ENCODE measurements at regions of chr1 and their contacts with region 1.

Region 1: GRCh38 chr1:245031041-245031440 is 123.7 kb upstream of the KIF26B start:
- DNase-seq: no peak
- H3K4me3 ChIP-seq: no peak overlapping the region
- H3K27ac ChIP-seq: no peak overlapping the region
- H3K4me1 ChIP-seq: no peaks in the 10 kb centered on the region
- H3K27me3 ChIP-seq: no peaks in the 10 kb centered on the region
- CTCF ChIP-seq: no peak

Region 2: DNA sequence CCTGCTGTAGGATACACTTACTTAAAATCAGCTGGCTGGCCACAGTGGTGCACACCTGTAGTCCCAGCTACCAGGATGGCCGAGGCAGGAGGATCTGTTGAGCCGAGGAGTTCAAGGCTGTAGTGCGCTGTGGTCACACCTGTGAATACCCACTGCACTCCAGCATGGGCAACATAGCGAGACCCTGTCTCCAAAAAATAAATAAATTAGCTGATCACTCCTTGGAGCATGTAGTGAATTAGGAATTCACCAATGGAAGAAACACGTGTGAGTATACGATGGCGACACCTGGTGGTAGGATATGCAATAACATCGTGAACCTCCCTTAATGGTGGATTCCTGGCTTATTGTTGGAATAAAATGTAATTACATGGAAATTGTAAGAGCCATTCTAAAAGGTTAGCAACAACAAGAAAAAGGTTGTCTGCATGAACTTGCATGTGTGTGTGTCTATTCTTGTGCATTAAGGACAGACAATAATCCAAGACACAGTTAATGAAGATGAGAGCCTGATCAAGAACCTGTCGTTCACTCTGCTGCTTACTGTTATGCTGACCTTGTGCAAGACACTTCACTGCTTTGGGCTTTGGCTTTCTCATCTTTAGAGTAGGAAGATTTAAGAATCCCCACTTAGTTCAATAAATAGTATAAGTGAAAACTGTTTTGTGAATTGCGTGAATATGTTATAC is 234.2 kb before region 1 on chr1:
- CTCF ChIA-PET with region 1: interaction called, 4 read pairs
- dilution Hi-C with region 1: no loop called
- in situ Hi-C with region 1: loop called in 1 of 2 experiments (anchors 10 kb)
- intact Hi-C with region 1: no loop called
- DNase-seq: peak; percentile 44
- H3K4me3 ChIP-seq: no peak overlapping the region
- H3K27ac ChIP-seq: no peak overlapping the region
- H3K4me1 ChIP-seq: no peaks in the 10 kb centered on the region
- H3K27me3 ChIP-seq: no peaks in the 10 kb centered on the region
- CTCF ChIP-seq: peak; percentile 74 to 91

Region 3: GRCh38 chr1:244989813-244990212 is 41.2 kb before region 1 on chr1:
- CTCF ChIA-PET with region 1: no interaction called
- dilution Hi-C with region 1: loop called (anchors 5 kb)
- in situ Hi-C with region 1: no loop called
- intact Hi-C with region 1: no loop called
- DNase-seq: peak; percentile 51
- H3K4me3 ChIP-seq: no peak overlapping the region
- H3K27ac ChIP-seq: no peak overlapping the region
- H3K4me1 ChIP-seq: peaks cover 5% of the 10 kb centered on the region
- H3K27me3 ChIP-seq: no peaks in the 10 kb centered on the region
- CTCF ChIP-seq: no peak